GM10248 (cell line): ENCODE measurements at regions of chr1 and their contacts with region 1.

Region 1: GRCh38 chr1:110766025-110766647 is 91.4 kb upstream of the KCNA3 start:
- DNase-seq: peak; percentile 63
- CTCF ChIP-seq: peak; percentile 76

Region 2: GRCh38 chr1:110524311-110525251 is 241.6 kb before region 1 on chr1:
- CTCF ChIA-PET with region 1: interaction called, 12 read pairs
- POLR2A ChIA-PET with region 1: no interaction called
- DNase-seq: peak; percentile 72
- CTCF ChIP-seq: peak; percentile 63

Region 3: GRCh38 chr1:110619412-110620249 is 146.5 kb before region 1 on chr1:
- CTCF ChIA-PET with region 1: interaction called, 105 read pairs
- POLR2A ChIA-PET with region 1: no interaction called
- DNase-seq: peak; percentile 88
- CTCF ChIP-seq: peak; percentile 96

Region 4: DNA sequence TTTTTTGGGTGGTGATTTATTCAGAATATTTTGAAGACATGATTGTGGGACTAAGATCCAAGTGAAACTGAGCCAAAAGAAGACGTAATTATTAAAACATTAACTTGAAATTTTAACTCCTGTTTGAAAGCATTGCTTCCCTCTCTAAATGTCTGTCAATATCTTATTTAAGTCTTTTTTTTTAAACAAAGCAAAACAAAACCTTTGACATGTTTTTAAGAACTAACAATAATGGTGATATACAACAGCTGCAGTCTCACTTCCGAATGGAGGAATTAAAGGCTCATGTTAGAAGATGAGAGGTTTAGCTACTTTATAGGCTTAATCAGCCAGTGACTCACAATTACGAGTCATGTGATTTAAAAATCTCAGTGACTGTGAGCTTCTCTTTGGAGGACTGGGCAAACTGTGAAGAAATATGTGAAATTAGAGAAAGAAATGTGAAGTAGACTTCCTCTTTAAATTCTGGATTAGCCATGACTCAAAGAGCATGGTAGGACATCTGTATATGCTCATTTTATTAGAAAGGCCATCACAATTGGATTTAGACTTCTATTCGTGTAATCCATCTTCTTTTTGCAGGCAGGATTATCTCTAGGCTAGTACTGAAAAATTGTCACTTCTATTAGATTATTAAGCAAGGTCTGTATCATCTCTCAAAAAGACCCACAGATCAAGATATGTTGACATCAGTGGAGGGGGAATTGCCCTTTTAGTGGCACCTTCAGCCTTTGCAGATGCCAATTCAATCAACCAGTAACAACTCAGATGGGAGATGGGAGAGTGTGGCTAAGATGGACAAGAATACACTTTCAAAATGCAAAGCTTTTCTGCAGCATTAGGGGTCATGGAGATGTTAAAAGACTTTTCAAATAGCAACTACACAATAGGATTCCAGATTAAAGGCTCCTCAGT is 120.1 kb before region 1 on chr1:
- CTCF ChIA-PET with region 1: interaction called, 31 read pairs
- POLR2A ChIA-PET with region 1: no interaction called
- DNase-seq: no peak
- CTCF ChIP-seq: no peak

Region 5: DNA sequence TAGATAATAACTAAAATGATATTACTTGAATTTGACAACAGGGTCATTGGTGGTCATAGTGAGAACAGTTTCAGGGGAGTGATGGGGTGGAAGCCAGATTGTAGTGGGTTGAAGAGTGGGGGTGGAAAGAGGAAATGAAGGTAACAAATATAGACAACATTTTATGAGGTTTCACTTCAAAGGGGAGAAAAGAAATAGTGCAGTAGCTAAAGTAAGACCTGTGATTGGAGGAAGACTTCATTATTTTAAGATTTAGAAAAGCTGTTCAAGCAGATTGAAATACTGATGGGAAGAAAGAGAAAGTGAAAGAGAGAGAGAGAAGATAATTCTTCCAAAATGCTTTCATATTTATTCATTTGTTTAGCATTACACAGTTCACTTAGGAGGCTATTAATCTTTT is 39.4 kb before region 1 on chr1:
- CTCF ChIA-PET with region 1: interaction called, 16 read pairs
- POLR2A ChIA-PET with region 1: no interaction called
- DNase-seq: peak; percentile 79
- CTCF ChIP-seq: no peak

Region 6: DNA sequence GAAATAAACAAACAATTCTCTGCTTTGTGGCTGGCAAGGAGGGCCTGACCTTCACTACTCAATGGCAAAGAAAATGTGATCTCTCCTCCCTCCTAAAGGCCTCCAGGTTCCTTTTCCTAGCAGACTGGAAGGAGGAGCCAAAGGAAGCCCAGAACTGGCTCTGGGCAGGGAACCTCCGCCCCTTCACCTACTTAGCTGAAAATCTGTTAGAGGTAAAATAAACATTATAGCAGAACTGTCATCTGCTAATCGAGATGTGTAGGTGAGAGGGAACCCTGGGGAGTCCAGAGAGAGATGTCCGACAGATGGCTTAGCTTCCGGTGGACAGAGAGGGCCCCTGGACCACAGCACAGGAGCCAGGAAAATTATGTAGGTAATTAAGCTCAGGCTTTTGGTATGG is 16.2 kb before region 1 on chr1:
- CTCF ChIA-PET with region 1: interaction called, 13 read pairs
- POLR2A ChIA-PET with region 1: no interaction called
- DNase-seq: no peak
- CTCF ChIP-seq: no peak

Region 7: GRCh38 chr1:110787328-110788071 is 21.4 kb after region 1 on chr1:
- CTCF ChIA-PET with region 1: interaction called, 102 read pairs
- POLR2A ChIA-PET with region 1: no interaction called
- DNase-seq: peak; percentile 31
- CTCF ChIP-seq: no peak

Region 8: GRCh38 chr1:110857964-110858948 is 92.1 kb after region 1 on chr1:
- CTCF ChIA-PET with region 1: no interaction called
- POLR2A ChIA-PET with region 1: no interaction called
- DNase-seq: no peak
- CTCF ChIP-seq: no peak

Region 9: DNA sequence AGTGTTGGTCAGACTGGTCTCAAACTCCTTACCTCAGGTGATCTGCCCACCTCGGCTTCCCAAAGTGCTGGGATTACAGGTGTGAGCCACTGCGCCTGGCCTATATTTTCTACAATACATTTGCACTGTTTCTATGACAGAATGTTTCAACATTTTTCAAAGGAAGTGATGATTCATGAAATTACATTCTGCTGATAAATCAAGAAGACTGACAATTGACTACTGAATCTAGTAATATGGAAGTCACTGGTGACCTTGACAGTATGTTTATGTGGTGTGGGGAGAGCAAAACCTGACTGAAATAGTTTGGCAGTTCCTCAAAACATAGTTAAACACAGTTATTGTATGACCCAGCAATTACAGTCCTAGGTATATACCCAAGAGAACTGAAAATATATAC is 179.5 kb after region 1 on chr1:
- CTCF ChIA-PET with region 1: no interaction called
- POLR2A ChIA-PET with region 1: no interaction called
- DNase-seq: no peak
- CTCF ChIP-seq: no peak